ENCODE measurements at regions of chr10 and their contacts with region 1.

Region 1: GRCh38 chr10:93554760-93555432 is 11.6 kb upstream of the FFAR4 start:
- DNase-seq: peak; percentile 58
- H3K4me3 Mint-ChIP-seq: no peak overlapping the region
- H3K27ac Mint-ChIP-seq: no peak overlapping the region
- H3K4me1 Mint-ChIP-seq: no peaks in the 10 kb centered on the region
- H3K27me3 Mint-ChIP-seq: peaks cover 11% of the 10 kb centered on the region

Region 2: DNA sequence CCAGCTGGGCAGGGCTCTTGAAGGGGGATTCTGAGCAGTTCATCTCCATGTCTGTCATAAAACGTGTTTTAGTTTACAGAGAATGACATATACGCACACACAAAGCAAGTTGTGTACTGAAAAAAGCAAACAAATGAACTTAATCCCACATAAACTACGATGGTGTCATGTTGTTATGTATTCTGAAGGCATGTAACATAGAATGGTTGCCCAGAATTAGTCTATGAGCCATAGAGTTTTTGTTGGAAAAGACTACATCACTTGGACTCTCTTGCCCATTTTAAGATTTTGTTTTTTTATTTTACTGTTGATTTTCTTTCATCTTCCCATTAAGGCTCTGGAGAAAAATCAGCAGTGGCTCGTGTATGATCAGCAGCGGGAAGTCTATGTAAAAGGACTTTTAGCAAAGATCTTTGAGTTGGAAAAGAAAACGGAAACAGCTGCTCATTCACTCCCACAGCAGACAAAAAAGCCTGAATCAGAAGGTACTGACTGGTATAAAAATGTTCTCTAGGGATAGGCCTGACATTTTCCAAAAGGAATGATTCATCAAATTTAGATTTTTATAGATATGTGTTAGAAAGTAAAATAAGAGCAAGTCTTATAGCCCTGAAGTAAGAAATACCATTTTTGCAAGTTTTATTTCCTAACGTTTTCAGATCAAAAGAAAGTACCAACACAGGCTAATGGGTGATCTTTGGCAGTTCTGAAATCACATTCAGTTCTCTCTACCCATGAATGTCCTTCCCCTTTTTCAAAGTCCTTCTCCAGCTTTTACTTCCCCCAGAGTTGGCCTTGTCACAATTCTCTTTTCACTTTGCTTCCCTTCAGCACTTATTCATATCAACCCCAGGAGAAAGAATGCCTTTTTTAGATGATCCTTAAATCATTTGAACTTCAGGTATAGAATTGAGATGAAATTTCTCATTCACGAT is 39.6 kb before region 1 on chr10:
- CTCF ChIA-PET with region 1: no interaction called
- DNase-seq: no peak
- H3K4me3 Mint-ChIP-seq: no peak overlapping the region
- H3K27ac Mint-ChIP-seq: no peak overlapping the region
- H3K4me1 Mint-ChIP-seq: peaks cover 2% of the 10 kb centered on the region
- H3K27me3 Mint-ChIP-seq: no peaks in the 10 kb centered on the region

Region 3: GRCh38 chr10:93680412-93681047 is 125.6 kb after region 1 on chr10:
- CTCF ChIA-PET with region 1: interaction called, 21 read pairs
- DNase-seq: no peak
- H3K4me3 Mint-ChIP-seq: no peak overlapping the region
- H3K27ac Mint-ChIP-seq: no peak overlapping the region
- H3K4me1 Mint-ChIP-seq: no peaks in the 10 kb centered on the region
- H3K27me3 Mint-ChIP-seq: no peaks in the 10 kb centered on the region

Region 4: GRCh38 chr10:93816123-93816747 is 261.3 kb after region 1 on chr10:
- CTCF ChIA-PET with region 1: interaction called, 22 read pairs
- DNase-seq: peak; percentile 42
- H3K4me3 Mint-ChIP-seq: no peak overlapping the region
- H3K27ac Mint-ChIP-seq: no peak overlapping the region
- H3K4me1 Mint-ChIP-seq: no peaks in the 10 kb centered on the region
- H3K27me3 Mint-ChIP-seq: peaks cover 21% of the 10 kb centered on the region

Measured in activated naive CD4-positive, alpha-beta T cell treated with anti-CD3 and anti-CD28 coated beads, Interleukin-2, amount 10 ng/mL, durations not matched to agents 7 days and 5 days (primary cell).